Colonic mucosa (tissue), 4 donors: ENCODE measurements at regions of chr1 and their contacts with region 1.

Region 1: DNA sequence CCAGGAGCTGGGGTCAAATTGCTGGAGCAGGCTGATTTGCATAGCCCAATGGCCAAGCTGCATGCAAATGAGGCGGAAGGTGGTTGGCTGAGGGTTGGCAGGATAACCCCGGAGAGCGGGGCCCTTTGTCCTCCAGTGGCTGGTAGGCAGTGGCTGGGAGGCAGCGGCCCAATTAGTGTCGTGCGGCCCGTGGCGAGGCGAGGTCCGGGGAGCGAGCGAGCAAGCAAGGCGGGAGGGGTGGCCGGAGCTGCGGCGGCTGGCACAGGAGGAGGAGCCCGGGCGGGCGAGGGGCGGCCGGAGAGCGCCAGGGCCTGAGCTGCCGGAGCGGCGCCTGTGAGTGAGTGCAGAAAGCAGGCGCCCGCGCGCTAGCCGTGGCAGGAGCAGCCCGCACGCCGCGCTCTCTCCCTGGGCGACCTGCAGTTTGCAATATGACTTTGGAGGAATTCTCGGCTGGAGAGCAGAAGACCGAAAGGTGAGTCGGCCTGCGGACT is at the start of gene GADD45A:
- DNase-seq: peak; percentile 99
- H3K4me3 ChIP-seq: peak within 1 kb of the TSS; percentile 72
- H3K27ac ChIP-seq: peak within 1 kb of the TSS; percentile 92
- H3K4me1 ChIP-seq: peaks cover 9% of the 10 kb centered on the region
- H3K27me3 ChIP-seq: no peaks in the 10 kb centered on the region
- CTCF ChIP-seq: no peak
- total RNA-seq, gene GADD45A: 29.0 to 29.4 TPM

Region 2: DNA sequence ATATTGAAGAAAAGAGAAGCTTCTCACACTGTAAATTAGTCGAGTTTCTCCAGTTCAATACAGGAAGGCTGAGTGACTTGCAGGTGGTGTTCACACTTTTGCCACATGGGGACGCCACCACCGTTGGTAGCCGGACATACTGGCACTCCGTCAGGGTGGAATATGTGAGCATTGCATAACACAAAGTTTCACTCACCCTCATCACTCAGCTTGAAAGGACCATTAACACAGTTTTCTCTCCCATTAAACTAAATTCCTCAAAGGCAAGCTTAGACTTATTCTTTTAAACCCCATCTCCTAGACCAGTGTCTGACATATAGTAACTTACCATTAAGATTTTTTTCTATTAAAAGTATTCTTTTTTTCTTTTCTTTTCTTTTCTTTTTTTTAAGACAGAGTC is 149.6 kb before region 1 on chr1:
- intact Hi-C with region 1: loop called (anchors 10 kb)
- DNase-seq: peak; percentile 87
- H3K4me3 ChIP-seq: no peak overlapping the region
- H3K27ac ChIP-seq: no peak overlapping the region
- H3K4me1 ChIP-seq: peaks cover 6% of the 10 kb centered on the region
- H3K27me3 ChIP-seq: no peaks in the 10 kb centered on the region
- CTCF ChIP-seq: peak; percentile 85

Region 3: GRCh38 chr1:67561704-67562113 is 123.4 kb before region 1 on chr1:
- intact Hi-C with region 1: loop called (anchors 10 kb)
- DNase-seq: peak; percentile 98
- H3K4me3 ChIP-seq: no peak overlapping the region
- H3K27ac ChIP-seq: no peak overlapping the region
- H3K4me1 ChIP-seq: no peaks in the 10 kb centered on the region
- H3K27me3 ChIP-seq: no peaks in the 10 kb centered on the region
- CTCF ChIP-seq: peak; percentile 74